Calu3 (cell line): ENCODE measurements at regions of chr20 and their contacts with region 1.

Region 1: DNA sequence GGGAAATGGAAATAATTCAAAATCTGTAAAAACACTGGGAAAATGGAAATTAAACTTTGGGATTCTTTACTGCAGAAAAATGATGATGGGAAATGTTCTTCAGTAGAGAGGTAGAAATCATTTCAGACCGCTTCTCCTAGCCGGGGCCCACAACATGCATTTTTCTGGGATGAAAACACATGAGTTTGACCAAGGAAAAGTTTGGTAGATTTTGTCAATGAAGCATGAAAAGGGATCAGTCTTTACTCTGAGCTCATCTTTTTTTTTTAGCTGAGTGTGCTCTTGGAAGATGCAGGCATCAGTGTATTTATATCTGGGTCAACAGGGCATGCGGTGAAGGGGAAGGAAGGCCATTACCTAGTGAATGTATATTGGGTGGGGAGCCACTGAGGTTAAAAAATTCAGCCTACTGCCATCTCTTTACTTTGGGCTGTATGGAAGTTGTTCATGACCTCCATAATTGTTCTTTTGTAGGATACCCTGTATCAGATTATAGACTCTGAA is 36.8 kb downstream of the PLCB1 start:
- DNase-seq: no peak
- H3K4me3 Mint-ChIP-seq: no peak overlapping the region
- H3K27ac Mint-ChIP-seq: no peak overlapping the region
- H3K4me1 Mint-ChIP-seq: no peaks in the 10 kb centered on the region
- H3K27me3 Mint-ChIP-seq: peaks cover 19% of the 10 kb centered on the region
- CTCF ChIP-seq: no peak

Region 2: DNA sequence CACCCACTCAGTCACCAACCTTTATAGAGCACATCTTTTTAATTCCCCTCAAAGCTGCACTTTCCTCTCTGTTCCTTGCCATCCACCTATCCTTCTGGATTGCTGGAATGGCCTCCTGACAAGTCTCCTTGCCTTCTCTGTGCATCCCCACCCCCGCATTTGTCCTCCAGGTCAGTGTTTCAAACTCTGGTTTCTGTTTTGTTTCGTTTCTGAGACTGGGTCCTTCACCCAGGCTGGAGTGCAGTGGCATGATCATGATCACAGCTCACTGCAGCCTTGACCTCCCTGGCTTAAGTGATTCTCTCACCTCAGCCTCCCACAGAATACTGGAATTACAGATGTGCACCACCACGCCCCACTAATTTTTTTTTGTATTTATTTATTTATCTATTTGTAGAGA is 59.5 kb after region 1 on chr20:
- CTCF ChIA-PET with region 1: interaction called, 10 read pairs
- intact Hi-C with region 1: no loop called
- DNase-seq: no peak
- H3K4me3 Mint-ChIP-seq: no peak overlapping the region
- H3K27ac Mint-ChIP-seq: no peak overlapping the region
- H3K4me1 Mint-ChIP-seq: no peaks in the 10 kb centered on the region
- H3K27me3 Mint-ChIP-seq: peaks cover 13% of the 10 kb centered on the region
- CTCF ChIP-seq: no peak

Region 3: DNA sequence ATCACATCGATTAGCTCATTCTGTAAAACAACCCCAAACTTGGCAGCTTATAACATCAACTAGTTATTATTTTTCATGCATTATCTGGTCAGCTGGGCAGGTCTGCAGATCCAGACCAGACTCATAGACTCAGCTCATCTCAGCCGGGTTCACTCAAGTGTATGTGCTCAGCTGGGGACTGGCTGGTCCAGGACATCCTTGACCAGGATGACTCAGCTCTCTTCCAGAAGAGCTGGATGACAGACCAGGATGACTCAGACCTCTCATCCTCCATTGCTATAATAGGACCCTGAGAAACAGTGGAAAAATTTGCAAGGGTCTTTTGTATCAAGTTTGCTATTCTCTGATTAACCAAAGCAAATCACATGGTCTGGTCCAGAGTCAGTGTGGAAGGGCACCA is 587.6 kb after region 1 on chr20:
- CTCF ChIA-PET with region 1: no interaction called
- intact Hi-C with region 1: no loop called
- DNase-seq: no peak
- H3K4me3 Mint-ChIP-seq: no peak overlapping the region
- H3K27ac Mint-ChIP-seq: no peak overlapping the region
- H3K4me1 Mint-ChIP-seq: no peaks in the 10 kb centered on the region
- H3K27me3 Mint-ChIP-seq: no peaks in the 10 kb centered on the region
- CTCF ChIP-seq: no peak

Region 4: GRCh38 chr20:8867181-8867740 is 698.4 kb after region 1 on chr20:
- CTCF ChIA-PET with region 1: no interaction called
- intact Hi-C with region 1: no loop called
- DNase-seq: peak; percentile 10
- H3K4me3 Mint-ChIP-seq: no peak overlapping the region
- H3K27ac Mint-ChIP-seq: no peak overlapping the region
- H3K4me1 Mint-ChIP-seq: peaks cover 21% of the 10 kb centered on the region
- H3K27me3 Mint-ChIP-seq: no peaks in the 10 kb centered on the region
- CTCF ChIP-seq: no peak